ENCODE measurements at regions of chr21 and their contacts with region 1.

Region 1: GRCh38 chr21:41507496-41508299 is at the start of gene TMPRSS2:
- DNase-seq: peak; percentile 68
- H3K4me3 Mint-ChIP-seq: peak within 1 kb of the TSS; percentile 71
- H3K27ac Mint-ChIP-seq: no peak within 1 kb of the TSS
- H3K4me1 Mint-ChIP-seq: peaks cover 2% of the 10 kb centered on the region
- H3K27me3 Mint-ChIP-seq: no peaks in the 10 kb centered on the region
- CTCF ChIP-seq: no peak
- total RNA-seq, gene TMPRSS2: 13.1 and 15.6 TPM in 2 replicates

Region 2: GRCh38 chr21:41482301-41482700 is 25.4 kb before region 1 on chr21:
- CTCF ChIA-PET with region 1: no interaction called
- intact Hi-C with region 1: no loop called
- DNase-seq: no peak
- H3K4me3 Mint-ChIP-seq: no peak overlapping the region
- H3K27ac Mint-ChIP-seq: no peak overlapping the region
- H3K4me1 Mint-ChIP-seq: peaks cover 15% of the 10 kb centered on the region
- H3K27me3 Mint-ChIP-seq: no peaks in the 10 kb centered on the region
- CTCF ChIP-seq: no peak

Region 3: GRCh38 chr21:41564871-41565274 is 57.2 kb after region 1 on chr21:
- CTCF ChIA-PET with region 1: interaction called, 4 read pairs
- intact Hi-C with region 1: loop called (anchors 10 kb)
- DNase-seq: peak; percentile 35
- H3K4me3 Mint-ChIP-seq: peak overlapping the region; percentile 3
- H3K27ac Mint-ChIP-seq: peak overlapping the region; percentile 75
- H3K4me1 Mint-ChIP-seq: peaks cover 40% of the 10 kb centered on the region
- H3K27me3 Mint-ChIP-seq: peaks cover 15% of the 10 kb centered on the region
- CTCF ChIP-seq: no peak

Measured in Calu3 (cell line).